Motor neuron (in vitro differentiated cells): ENCODE measurements at regions of chrX and their contacts with region 1.

Region 1: DNA sequence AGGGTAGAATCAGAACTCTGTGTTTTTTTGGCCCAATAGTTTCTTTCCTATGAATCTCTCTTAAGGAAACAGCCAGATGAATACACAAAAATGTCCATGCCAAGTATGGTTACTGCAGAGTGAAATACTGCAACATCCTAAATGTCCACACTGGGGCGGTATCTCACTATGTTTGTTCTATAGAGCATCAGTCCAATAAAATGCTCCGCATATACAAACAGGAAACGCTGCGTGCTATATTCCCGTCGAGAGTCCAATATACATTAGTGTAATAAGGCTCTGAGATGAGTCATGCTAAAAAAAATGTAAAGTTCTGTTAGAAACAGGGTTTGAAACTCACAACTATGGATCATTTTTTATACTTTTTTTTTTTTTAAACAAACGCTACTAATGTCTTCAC is 72.9 kb upstream of the ENOX2 start:
- ATAC-seq: peak; percentile 60 to 94 (median 72)
- H3K4me3 ChIP-seq: no peak overlapping the region
- H3K27ac ChIP-seq: no peak overlapping the region
- H3K4me1 ChIP-seq: no peaks in the 10 kb centered on the region

Region 2: DNA sequence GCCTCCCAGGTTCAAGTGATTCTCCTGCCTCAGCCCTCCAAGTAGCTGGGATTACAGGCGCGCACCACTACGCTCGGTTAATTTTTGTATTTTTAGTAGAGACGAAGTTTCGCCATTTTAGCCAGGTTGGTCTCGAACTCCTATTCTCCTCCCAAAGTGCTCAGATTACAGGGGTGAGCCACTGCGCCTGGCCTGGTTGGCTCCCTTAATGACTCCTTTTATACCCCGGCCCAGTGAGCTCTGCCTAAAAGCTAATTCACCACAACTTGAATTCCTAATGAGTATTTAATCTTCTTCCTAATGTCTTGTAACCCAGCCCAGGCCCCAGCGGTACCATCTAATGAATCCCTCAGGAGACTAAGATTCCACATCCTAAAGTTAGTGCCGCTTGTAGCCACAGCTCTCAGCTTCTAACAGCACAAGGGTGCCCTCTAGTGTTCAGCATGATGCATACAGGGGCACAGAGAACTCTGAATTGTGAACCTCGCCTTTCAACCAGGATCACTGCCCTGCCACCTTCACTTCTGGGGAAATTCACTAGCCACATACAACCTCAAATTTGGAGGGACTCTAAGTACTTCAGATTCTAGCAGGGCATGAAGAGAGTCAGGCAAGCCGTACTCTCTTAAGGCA is 657.5 kb after region 1 on chrX:
- in situ Hi-C with region 1: loop called in 6 of 9 experiments (anchors 25 kb)
- ATAC-seq: peak; percentile 75 to 91 (median 80)
- H3K4me3 ChIP-seq: no peak overlapping the region
- H3K27ac ChIP-seq: no peak overlapping the region
- H3K4me1 ChIP-seq: no peaks in the 10 kb centered on the region

Region 3: GRCh38 chrX:131650637-131651410 is 674.9 kb after region 1 on chrX:
- in situ Hi-C with region 1: loop called in 7 of 9 experiments (anchors 25 kb)
- ATAC-seq: no peak
- H3K4me3 ChIP-seq: no peak overlapping the region
- H3K27ac ChIP-seq: no peak overlapping the region
- H3K4me1 ChIP-seq: no peaks in the 10 kb centered on the region